Activated CD8-positive, alpha-beta memory T cell treated with anti-CD3 and anti-CD28 coated beads, Interleukin-2, amount 10 ng/mL, durations not matched to agents 7 days and 5 days (primary cell): ENCODE measurements at regions of chr17 and their contacts with region 1.

Region 1: GRCh38 chr17:50816771-50817751 is 18.3 kb upstream of the WFIKKN2 start:
- DNase-seq: peak; percentile 53
- ATAC-seq: peak; percentile 66
- H3K4me3 Mint-ChIP-seq: no peak overlapping the region
- H3K27ac Mint-ChIP-seq: no peak overlapping the region
- H3K4me1 Mint-ChIP-seq: peaks cover 39% of the 10 kb centered on the region
- H3K27me3 Mint-ChIP-seq: peaks cover 29% of the 10 kb centered on the region

Region 2: DNA sequence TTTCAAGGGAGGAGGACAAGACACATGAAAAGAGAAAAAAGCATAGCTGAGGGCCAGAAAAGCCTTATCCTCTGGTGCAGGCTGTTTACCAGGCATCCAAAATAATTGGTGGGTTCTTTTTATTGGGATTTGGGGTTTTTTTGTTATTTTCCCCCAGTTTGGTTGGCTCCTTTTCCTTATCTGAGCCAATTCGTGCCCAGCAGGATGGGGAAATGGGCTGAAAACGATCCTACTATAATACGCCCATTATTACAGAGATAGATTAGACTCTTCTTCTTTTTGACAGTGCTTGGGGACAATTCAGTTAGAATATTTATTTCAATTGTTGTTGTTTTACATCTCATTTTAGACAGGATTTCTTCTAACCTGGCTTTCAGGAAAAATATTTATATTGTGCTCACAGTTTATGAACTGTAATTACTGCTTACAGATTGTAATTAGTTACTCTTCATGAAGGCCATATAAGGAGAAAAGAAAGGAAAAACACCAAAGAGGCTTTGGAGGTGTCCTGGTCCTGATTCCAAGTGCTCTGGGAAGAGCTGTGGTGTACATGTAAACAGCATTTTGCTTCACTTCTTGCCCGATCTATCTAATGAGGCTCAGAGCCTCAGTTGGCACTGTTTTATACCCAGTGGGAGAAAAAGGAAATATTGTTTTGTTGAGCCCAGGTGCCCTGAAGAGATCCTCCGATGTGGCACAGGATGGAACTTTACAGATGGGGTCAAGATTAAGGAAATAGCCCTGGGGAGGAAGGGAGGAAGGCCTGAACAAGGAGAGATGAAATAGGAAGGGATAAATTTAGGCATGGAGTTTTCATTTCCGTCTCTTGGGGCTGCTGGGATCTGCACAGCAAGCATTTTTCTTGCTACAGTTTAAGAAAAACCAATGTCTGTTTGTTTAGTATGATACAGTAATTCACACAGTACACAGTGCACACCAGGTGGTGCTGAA is 108.7 kb before region 1 on chr17:
- CTCF ChIA-PET with region 1: no interaction called
- DNase-seq: no peak
- ATAC-seq: no peak
- H3K4me3 Mint-ChIP-seq: peak overlapping the region; percentile 82
- H3K27ac Mint-ChIP-seq: peak overlapping the region; percentile 96
- H3K4me1 Mint-ChIP-seq: peaks cover 46% of the 10 kb centered on the region
- H3K27me3 Mint-ChIP-seq: no peaks in the 10 kb centered on the region

Region 3: DNA sequence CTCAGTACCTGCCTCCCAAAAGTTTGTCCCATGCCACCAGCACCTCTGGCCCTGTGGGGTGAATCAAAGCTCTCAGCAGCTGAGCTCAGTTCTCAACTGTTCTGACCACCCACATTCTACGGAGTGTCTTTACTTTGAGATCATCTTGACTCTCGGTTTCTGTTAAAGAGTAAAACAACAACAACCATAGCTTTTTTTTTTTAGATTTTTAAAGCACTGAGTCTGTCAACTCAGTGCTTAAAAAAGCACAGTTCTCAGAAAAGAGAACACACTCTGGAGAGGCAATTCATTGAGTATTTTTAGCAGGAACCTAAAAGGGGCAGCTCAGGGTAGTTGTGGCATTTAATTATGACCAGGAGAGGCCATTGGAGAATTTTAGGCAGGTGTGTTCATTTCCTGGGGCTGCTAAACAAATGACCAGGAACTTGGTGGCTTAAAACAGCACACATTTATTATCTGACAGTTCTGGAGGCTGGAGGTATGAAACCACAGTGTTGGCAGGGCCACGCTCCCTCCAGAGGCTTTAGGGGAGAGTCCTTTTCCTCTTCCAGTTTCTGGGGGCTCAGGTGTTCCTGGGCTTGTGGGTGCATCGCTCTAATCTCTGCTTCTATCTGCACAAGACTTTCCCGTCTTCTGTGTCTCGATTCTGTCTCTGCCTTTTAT is 11.6 kb after region 1 on chr17:
- CTCF ChIA-PET with region 1: interaction called, 18 read pairs
- DNase-seq: no peak
- ATAC-seq: peak; percentile 27
- H3K4me3 Mint-ChIP-seq: no peak overlapping the region
- H3K27ac Mint-ChIP-seq: no peak overlapping the region
- H3K4me1 Mint-ChIP-seq: peaks cover 11% of the 10 kb centered on the region
- H3K27me3 Mint-ChIP-seq: peaks cover 9% of the 10 kb centered on the region